Lower leg skin (tissue), 4 donors: ENCODE measurements at regions of chr2 and their contacts with region 1.

Region 1: DNA sequence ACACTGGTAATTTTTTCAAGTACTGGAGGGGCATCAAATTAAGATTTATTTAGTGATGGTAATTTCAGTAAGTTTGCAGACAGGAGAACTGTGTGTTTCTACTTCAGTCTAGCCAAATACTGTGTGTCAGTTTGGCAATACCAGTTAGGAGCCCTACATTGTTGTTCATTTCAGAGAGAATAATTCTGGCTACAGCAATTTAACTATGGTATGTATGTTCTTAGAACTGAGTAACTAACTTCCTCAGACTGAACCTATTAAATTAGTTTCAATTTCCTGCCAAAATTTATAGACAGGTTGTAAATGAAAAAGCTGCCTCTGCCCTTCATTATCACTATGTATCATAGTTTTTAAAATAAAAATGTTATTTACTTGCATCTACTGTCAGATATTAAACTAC is 332.4 kb downstream of the PARD3B start:
- DNase-seq: no peak
- H3K4me3 ChIP-seq: no peak overlapping the region
- CTCF ChIP-seq: no peak
- POLR2A ChIP-seq: no peak

Region 2: GRCh38 chr2:205680067-205680466 is 802.4 kb after region 1 on chr2:
- intact Hi-C with region 1: loop called (anchors 5 kb)
- DNase-seq: no peak
- H3K4me3 ChIP-seq: no peak overlapping the region
- CTCF ChIP-seq: no peak
- POLR2A ChIP-seq: no peak